ENCODE measurements at regions of chr5 and their contacts with region 1.

Region 1: GRCh38 chr5:139482050-139482889 is at the start of gene STING1:
- DNase-seq: peak; percentile 90
- H3K4me3 ChIP-seq: peak within 1 kb of the TSS; percentile 4 to 67 (median 42)
- H3K27ac ChIP-seq: peak within 1 kb of the TSS; percentile 94
- H3K4me1 ChIP-seq: peaks cover 27% of the 10 kb centered on the region
- H3K27me3 ChIP-seq: no peaks in the 10 kb centered on the region
- CTCF ChIP-seq: no peak
- POLR2A ChIP-seq: peak; percentile 58
- total RNA-seq, gene STING1: 108 and 127 TPM in 2 replicates

Region 2: DNA sequence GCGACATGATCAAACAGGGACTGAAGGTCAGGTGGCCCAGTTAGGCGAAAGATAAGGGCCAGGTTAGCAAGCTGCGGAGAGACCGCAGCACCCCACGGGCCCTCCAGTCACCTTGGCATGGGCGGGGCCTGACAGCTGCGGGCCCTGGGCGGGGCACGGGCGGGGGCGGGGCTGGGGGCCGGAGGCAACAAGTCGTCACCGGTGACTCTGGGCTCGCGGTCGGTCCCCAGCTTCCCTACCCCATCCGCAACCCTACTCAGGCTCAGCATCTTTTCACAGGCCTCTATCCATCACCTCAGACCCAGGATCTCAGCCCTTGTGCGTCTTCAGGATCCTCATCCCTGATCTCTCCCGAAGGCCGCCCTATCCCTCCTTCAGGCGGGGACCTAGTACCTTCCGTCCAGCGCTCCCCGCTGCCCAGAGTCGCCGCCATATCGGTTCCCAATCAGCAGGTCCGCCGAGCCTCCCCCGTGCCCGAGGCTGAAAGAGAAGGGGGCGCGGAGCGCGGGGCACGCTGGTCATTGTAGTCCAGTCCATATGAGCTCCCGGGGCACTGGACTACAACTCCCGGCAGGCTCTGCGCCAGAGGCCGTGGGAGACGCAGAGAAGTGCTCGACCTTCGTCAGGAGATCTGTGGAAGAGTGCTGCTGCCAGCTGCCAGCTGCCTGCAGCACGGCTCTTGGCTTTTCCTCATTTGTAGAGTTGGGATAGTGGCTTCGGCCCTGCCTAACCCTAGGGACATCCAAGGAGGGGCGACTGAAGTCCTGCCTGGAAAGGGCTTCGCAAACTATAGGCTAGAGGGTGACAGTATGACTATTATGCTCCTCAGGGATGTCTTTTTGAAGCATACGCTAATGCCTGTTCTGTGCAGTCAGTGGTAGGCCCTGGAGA is 43.0 kb before region 1 on chr5 and contains the start of gene DNAJC18:
- CTCF ChIA-PET with region 1: interaction called, 8 read pairs
- POLR2A ChIA-PET with region 1: interaction called, 7 read pairs
- dilution Hi-C with region 1: no loop called
- intact Hi-C with region 1: loop called (anchors 1 kb)
- DNase-seq: peak; percentile 88
- H3K4me3 ChIP-seq: peak within 1 kb of the TSS; percentile 42 to 66 (median 54)
- H3K27ac ChIP-seq: peak within 1 kb of the TSS; percentile 83
- H3K4me1 ChIP-seq: peaks cover 29% of the 10 kb centered on the region
- H3K27me3 ChIP-seq: no peaks in the 10 kb centered on the region
- CTCF ChIP-seq: no peak
- POLR2A ChIP-seq: peak; percentile 49
- total RNA-seq, gene DNAJC18: 51.1 and 52.6 TPM in 2 replicates

Region 3: DNA sequence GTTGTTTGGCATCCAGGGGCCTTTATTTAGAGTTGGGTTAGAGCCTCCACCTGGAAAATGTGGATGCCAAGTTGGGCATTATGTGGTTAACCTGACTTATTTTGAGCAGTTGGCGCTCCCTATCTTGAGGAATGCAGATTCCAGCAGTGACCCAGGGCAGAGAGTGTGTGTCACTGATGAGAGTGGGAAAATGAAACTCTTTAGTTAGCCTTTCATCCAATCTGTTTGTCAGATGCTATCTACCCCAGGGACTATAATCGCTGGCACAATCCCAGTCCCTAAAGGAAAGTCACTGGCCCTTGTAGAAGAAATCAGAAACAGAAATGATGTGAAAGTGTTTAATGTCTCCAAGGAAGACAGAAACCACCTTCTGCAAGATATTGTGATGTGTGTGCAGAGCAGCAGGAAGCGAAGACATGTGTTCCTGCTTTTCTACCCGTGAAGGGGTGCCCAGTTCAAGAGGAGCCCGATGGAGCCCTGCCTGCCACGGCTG is 10.5 kb after region 1 on chr5:
- CTCF ChIA-PET with region 1: interaction called, 39 read pairs
- POLR2A ChIA-PET with region 1: interaction called, 10 read pairs
- dilution Hi-C with region 1: no loop called
- intact Hi-C with region 1: loop called (anchors 1 kb)
- DNase-seq: peak; percentile 31
- H3K4me3 ChIP-seq: no peak overlapping the region
- H3K27ac ChIP-seq: no peak overlapping the region
- H3K4me1 ChIP-seq: peaks cover 33% of the 10 kb centered on the region
- H3K27me3 ChIP-seq: no peaks in the 10 kb centered on the region
- CTCF ChIP-seq: no peak
- POLR2A ChIP-seq: no peak

Region 4: DNA sequence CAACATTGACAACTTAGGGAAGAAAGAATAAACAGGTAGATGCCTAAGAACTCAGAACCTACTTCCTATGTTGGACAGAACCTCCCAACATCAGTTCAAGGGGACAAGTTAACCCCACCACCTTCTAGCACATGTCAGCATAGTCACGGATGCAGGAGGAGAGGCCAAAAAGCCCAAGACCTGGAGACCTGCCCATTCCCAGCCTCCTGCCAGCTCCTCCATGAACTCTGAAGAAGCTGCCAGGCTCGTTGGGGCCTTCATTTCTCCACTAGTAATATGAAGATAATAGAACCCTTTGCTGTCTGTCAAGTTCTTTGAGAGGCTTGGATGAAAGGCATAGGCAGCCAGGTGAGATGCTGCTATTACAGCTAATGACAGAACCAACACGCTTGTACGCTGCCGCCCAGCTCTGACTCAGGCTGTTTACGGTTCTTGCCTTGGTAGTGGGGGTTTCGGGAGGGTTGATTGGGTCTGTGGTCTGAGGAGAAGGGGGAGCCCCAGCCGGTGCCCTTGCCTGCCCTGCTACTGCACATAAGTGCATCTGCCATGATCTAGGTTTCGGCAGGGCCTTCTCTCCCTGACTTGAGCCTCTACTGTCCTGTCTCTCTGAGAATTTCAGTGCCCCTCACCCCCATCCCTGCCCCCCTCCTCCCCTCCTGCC is 478.6 kb after region 1 on chr5:
- CTCF ChIA-PET with region 1: no interaction called
- POLR2A ChIA-PET with region 1: no interaction called
- dilution Hi-C with region 1: no loop called
- intact Hi-C with region 1: no loop called
- DNase-seq: no peak
- H3K4me3 ChIP-seq: no peak overlapping the region
- H3K27ac ChIP-seq: no peak overlapping the region
- H3K4me1 ChIP-seq: no peaks in the 10 kb centered on the region
- H3K27me3 ChIP-seq: peaks cover 11 to 20% of the 10 kb centered on the region in 2 experiments
- CTCF ChIP-seq: no peak
- POLR2A ChIP-seq: no peak